Activated CD4-positive, alpha-beta T cell treated with anti-CD3 and anti-CD28 coated beads for 36 hours (primary cell): ENCODE measurements at regions of chrX and their contacts with region 1.

Region 1: DNA sequence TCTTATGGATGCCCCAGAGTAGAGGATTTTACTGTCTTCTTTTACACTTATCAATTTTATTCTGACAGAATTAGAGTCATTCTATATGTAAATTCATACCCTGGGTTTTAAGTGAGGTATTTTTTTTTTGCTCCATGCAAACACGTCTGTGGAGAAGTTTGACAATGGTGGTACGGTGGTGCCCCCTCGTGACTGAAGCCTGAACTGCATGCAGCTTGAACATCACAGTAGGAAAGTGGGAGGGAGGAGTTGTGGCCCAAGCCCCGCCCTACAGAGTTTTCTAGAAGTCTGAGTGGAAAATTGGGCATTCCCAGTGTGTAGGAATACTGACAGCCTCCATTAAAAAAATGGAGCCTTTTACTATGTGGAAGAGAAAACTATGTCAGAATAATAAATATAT is 73.3 kb upstream of the RAB40AL start:
- DNase-seq: peak; percentile 86
- ATAC-seq: peak; percentile 78
- H3K4me3 Mint-ChIP-seq: no peak overlapping the region
- H3K27ac Mint-ChIP-seq: no peak overlapping the region
- H3K4me1 Mint-ChIP-seq: no peaks in the 10 kb centered on the region
- H3K27me3 Mint-ChIP-seq: no peaks in the 10 kb centered on the region

Region 2: DNA sequence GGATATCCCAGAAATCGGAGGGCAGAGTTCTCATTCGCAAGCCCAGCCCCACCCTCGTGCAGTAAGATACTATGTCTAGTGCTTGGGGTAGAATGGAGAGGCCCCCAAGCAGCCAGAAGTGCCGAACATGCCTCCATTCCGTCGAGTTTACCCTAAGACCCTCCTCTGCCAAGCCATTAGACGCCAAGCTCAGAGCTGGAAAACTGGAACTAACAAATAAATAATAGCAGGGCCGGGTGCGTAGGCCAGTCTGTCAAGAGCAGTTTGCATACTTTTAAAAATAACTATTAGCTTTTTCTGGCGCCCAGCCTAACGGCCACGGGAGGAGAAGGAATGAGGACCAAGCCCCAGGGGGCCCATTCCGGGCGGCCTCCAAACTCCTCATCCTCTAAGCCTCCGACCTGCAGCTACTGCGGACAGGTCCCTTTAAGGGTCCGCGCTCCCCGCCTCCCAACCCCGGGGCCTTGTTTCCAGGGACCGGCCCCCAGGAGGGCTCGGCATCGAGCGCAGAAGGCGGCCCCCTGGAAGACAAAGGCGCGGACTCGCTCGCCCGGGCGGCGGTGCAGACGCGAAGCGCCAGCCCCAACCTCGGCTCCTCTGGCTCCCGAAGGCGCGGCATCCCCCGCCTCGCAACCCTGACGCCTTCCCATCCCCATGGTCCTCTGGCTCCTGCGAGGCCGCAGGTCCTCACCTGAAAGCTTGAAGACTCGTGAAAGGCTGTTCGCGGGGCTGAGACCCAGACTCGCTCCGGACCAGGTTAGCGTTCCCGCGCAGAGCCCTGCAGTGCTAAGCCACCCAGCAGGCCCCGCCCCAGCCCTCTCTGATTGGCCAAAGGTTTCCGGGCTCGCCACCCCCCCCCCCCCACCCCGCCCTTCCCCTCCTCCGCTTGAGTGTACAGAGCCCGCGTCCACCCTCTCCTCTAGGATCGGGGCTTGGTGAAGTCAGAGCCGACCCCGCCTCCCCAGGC is 347.5 kb before region 1 on chrX and contains the start of gene TMSB15A:
- CTCF ChIA-PET with region 1: no interaction called
- POLR2A ChIA-PET with region 1: no interaction called
- intact Hi-C with region 1: loop called in 1 of 2 experiments (anchors 2 kb)
- DNase-seq: peak; percentile 75
- ATAC-seq: peak; percentile 98
- H3K4me3 Mint-ChIP-seq: peak within 1 kb of the TSS; percentile 73
- H3K27ac Mint-ChIP-seq: peak within 1 kb of the TSS; percentile 65
- H3K4me1 Mint-ChIP-seq: peaks cover 4% of the 10 kb centered on the region
- H3K27me3 Mint-ChIP-seq: peaks cover 35% of the 10 kb centered on the region
- total RNA-seq, gene TMSB15A: 0.84 to 1.1 TPM

Region 3: DNA sequence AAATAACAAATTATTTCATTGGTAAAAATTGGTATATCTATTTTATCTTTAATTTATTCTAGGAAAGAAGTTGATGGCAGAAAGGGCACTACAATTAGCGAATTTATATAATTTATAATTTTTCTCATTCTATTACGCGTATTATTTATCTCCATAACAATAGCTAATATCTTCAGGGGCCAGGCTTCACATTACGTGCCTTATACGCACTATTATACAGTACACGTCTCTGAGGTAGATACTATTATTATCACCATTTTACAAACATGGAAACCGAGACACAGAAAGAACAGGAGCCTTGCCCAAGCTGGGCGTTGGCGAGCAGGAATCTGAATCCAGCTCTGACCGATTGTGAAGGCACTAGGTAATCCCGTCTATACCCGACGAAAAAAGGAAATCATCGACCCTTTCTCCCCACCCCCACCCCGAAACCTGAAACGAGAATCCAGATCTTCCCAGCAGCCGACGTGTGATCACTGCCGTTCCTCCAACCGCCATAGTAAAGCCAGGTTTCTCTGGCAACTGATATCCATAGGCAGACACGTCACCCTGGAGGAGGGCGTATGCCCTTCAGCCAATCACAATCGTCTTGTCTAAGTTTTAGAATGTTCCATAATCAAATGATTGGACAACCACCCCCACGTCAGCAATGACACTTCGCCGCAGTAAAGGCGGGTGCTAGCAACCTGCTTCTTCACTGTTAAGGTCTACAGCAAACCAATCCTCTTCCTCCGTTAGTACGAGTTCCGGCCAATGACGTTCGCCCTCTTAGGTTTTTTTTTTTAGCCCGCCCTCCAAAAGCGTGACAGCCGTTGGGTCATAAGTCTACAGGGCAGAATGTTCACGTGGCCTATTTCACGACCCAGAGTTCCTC is 822.7 kb after region 1 on chrX and contains the start of gene MORF4L2:
- CTCF ChIA-PET with region 1: no interaction called
- POLR2A ChIA-PET with region 1: no interaction called
- intact Hi-C with region 1: no loop called
- DNase-seq: peak; percentile 91
- ATAC-seq: peak; percentile 91
- H3K4me3 Mint-ChIP-seq: no peak within 1 kb of the TSS
- H3K27ac Mint-ChIP-seq: peak within 1 kb of the TSS; percentile 94
- H3K4me1 Mint-ChIP-seq: peaks cover 9% of the 10 kb centered on the region
- H3K27me3 Mint-ChIP-seq: no peaks in the 10 kb centered on the region
- total RNA-seq, gene MORF4L2: 239 to 257 TPM